A673 (cell line): ENCODE measurements at regions of chr2 and their contacts with region 1.

Region 1: DNA sequence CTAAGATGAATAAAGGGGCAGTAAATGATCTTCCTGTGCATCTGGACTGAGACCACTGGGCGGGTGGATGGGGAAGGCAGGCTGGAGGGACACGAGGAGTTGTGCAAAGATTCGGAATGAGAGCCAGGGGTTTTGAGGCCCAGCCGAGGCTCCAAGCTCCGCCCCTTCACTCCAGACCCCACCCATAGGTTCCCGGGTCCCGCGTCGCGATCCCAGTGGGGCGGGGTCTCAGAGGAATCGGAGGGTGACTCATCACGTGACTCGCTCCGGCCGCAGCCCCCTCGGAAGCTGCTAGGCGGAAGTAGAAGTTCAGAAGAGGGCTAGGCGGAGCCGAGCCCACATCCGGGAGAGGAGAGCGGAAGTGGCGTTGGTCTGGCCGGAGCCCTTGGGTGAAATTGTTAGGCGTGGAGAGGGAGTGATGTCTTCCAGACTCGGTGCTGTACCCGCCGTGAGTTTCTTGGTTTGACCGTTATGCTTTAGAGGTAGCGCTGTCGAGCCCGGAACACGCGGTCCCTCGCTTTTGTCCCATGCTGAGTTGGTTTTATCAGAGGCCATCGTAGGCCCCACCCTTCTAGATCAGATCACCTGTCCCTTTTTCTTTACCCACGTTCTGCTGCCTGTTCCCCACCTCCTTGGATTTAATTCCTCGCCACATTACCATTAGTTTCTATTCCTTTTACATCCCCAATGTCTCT is at the start of gene ZNF512:
- DNase-seq: peak; percentile 98
- H3K4me3 ChIP-seq: peak within 1 kb of the TSS; percentile 77
- H3K27ac ChIP-seq: peak within 1 kb of the TSS; percentile 72
- H3K4me1 ChIP-seq: peaks cover 8% of the 10 kb centered on the region
- H3K27me3 ChIP-seq: no peaks in the 10 kb centered on the region
- CTCF ChIP-seq: no peak
- total RNA-seq, gene ZNF512: 61.3 TPM in 2 replicates

Region 2: GRCh38 chr2:27860111-27860510 is 277.3 kb after region 1 on chr2:
- CTCF ChIA-PET with region 1: no interaction called
- POLR2A ChIA-PET with region 1: no interaction called
- intact Hi-C with region 1: no loop called
- DNase-seq: no peak
- H3K4me3 ChIP-seq: no peak overlapping the region
- H3K27ac ChIP-seq: no peak overlapping the region
- H3K4me1 ChIP-seq: peaks cover 5% of the 10 kb centered on the region
- H3K27me3 ChIP-seq: no peaks in the 10 kb centered on the region
- CTCF ChIP-seq: no peak

Region 3: GRCh38 chr2:29123617-29124349 is 1540.9 kb after region 1 on chr2:
- CTCF ChIA-PET with region 1: interaction called, 15 read pairs
- POLR2A ChIA-PET with region 1: no interaction called
- intact Hi-C with region 1: no loop called
- DNase-seq: no peak
- H3K4me3 ChIP-seq: no peak overlapping the region
- H3K27ac ChIP-seq: no peak overlapping the region
- H3K4me1 ChIP-seq: no peaks in the 10 kb centered on the region
- H3K27me3 ChIP-seq: no peaks in the 10 kb centered on the region
- CTCF ChIP-seq: no peak